Activated CD4-positive, alpha-beta T cell treated with anti-CD3 and anti-CD28 coated beads for 36 hours (primary cell): ENCODE measurements at regions of chr1 and their contacts with region 1.

Region 1: GRCh38 chr1:26723013-26723991 is 27.5 kb downstream of the ARID1A start:
- DNase-seq: peak; percentile 54
- ATAC-seq: peak; percentile 50
- H3K4me3 Mint-ChIP-seq: peak overlapping the region; percentile 34
- H3K27ac Mint-ChIP-seq: peak overlapping the region; percentile 82
- H3K4me1 Mint-ChIP-seq: peaks cover 95% of the 10 kb centered on the region
- H3K27me3 Mint-ChIP-seq: no peaks in the 10 kb centered on the region

Region 2: DNA sequence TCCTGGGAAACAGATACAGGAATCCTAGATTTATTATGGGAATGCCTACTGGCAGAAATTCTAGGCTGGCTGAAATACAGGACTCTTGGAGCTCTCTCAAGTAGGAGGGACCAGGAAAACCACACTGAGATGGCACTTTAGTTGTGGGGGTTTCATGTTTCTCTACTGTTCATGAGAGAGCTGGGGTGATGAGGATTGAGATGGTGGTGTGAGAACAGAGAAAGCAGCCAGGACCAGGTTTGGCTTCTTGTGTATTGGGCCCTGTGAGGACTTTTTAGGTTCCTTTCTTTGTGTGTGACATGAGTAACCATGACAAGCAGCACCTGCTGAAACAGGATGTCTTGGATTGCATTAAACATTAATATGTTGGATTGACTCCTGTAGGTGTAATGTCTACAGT is 22.6 kb before region 1 on chr1:
- CTCF ChIA-PET with region 1: interaction called, 7 read pairs
- POLR2A ChIA-PET with region 1: interaction called, 8 read pairs
- intact Hi-C with region 1: loop called (anchors 1 to 2 kb)
- DNase-seq: no peak
- ATAC-seq: no peak
- H3K4me3 Mint-ChIP-seq: no peak overlapping the region
- H3K27ac Mint-ChIP-seq: no peak overlapping the region
- H3K4me1 Mint-ChIP-seq: peaks cover 10% of the 10 kb centered on the region
- H3K27me3 Mint-ChIP-seq: no peaks in the 10 kb centered on the region

Region 3: DNA sequence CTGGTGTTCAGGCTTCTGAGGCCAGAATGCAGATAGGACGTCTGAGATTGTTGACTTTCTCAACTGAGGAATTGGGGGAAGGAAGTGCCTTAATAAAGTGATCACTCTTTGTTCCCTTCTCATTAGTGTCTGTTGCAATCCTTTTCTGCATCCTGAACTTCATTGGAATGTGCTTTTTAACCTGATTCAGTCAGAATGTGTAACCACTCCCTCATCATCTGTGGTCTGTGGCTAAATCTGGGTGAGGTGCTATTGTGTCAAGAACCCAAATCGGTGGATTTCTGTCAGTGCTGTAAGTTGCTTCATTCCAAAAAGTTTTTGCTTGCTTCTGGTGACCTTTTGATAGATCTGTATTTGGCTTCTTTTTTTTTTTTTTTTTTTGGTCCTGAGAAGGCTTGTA is 10.7 kb after region 1 on chr1:
- CTCF ChIA-PET with region 1: interaction called, 14 read pairs
- POLR2A ChIA-PET with region 1: interaction called, 5 read pairs
- intact Hi-C with region 1: loop called in 1 of 2 experiments (anchors 1 kb)
- DNase-seq: peak; percentile 44
- ATAC-seq: peak; percentile 42
- H3K4me3 Mint-ChIP-seq: no peak overlapping the region
- H3K27ac Mint-ChIP-seq: peak overlapping the region; percentile 76
- H3K4me1 Mint-ChIP-seq: peaks cover 79% of the 10 kb centered on the region
- H3K27me3 Mint-ChIP-seq: no peaks in the 10 kb centered on the region

Region 4: GRCh38 chr1:26744075-26744959 is 21.0 kb after region 1 on chr1:
- CTCF ChIA-PET with region 1: interaction called, 8 read pairs
- POLR2A ChIA-PET with region 1: interaction called, 5 read pairs
- intact Hi-C with region 1: loop called (anchors 1 kb)
- DNase-seq: peak; percentile 90
- ATAC-seq: peak; percentile 93
- H3K4me3 Mint-ChIP-seq: peak overlapping the region; percentile 67
- H3K27ac Mint-ChIP-seq: peak overlapping the region; percentile 97
- H3K4me1 Mint-ChIP-seq: peaks cover 93% of the 10 kb centered on the region
- H3K27me3 Mint-ChIP-seq: no peaks in the 10 kb centered on the region

Region 5: GRCh38 chr1:27581823-27582243 is 858.5 kb after region 1 on chr1:
- CTCF ChIA-PET with region 1: no interaction called
- POLR2A ChIA-PET with region 1: no interaction called
- intact Hi-C with region 1: no loop called
- DNase-seq: no peak
- ATAC-seq: no peak
- H3K4me3 Mint-ChIP-seq: no peak overlapping the region
- H3K27ac Mint-ChIP-seq: no peak overlapping the region
- H3K4me1 Mint-ChIP-seq: peaks cover 9% of the 10 kb centered on the region
- H3K27me3 Mint-ChIP-seq: no peaks in the 10 kb centered on the region